RWPE1 (cell line): ENCODE measurements at regions of chr16 and their contacts with region 1.

Region 1: DNA sequence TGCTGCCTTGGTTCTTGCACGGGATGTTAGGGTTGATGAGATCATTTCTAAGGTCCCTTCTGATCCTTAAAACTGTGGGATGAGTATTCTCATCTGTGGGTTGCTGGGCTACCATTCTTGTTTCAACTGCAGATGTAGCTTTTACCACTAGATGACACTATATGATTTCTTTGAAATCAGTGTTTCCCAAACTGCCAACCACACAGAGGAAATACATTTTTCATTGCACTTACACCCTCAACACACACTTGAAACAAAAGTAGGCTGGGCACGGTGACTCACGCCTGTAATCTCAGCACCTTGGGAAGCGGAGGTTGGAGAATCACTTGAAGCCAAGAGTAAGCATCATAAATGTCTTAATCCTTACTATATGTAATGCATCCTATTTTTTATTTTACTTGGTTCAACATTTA is 15.3 kb downstream of the LCMT1 start:
- DNase-seq: peak; percentile 77
- H3K27ac ChIP-seq: no peak overlapping the region
- CTCF ChIP-seq: peak; percentile 72

Region 2: GRCh38 chr16:24863582-24864437 is 263.0 kb before region 1 on chr16:
- CTCF ChIA-PET with region 1: no interaction called
- POLR2A ChIA-PET with region 1: no interaction called
- DNase-seq: no peak
- H3K27ac ChIP-seq: no peak overlapping the region
- CTCF ChIP-seq: no peak

Region 3: DNA sequence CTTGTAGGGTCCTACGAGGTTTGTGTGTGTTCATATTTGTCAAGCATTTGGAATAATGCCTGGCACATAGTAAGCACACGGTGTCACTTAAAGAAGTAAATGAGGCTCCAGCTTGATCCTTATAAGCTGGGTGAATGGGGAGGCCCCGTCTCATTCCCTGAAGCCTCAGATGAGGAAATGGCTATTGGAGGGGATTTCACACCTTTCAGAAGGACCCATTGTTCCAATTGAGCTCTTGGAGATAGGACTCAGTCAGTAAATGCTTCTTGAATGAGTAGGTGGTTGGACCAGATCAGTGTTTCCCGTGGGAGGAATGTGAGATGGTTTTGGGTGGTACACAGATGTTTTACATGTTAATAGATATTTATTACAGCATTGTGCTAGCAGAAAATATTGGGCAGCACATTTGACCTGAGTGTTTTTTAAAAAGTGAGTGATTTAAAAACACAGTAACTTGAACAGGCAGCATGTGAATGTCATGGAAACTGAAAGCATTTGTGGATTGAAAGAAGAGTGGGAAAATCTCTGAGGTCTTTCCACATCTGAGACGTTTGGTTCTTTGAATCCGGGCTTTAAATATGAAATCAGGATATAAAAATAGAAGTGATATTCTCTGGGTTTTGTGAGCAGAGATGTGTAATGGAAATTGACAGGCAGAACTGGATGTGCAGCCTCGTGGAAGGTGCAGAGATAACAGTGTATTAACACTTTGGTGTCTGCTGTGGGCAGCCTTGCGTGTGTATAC is 75.2 kb before region 1 on chr16:
- CTCF ChIA-PET with region 1: no interaction called
- POLR2A ChIA-PET with region 1: no interaction called
- DNase-seq: no peak
- H3K27ac ChIP-seq: no peak overlapping the region
- CTCF ChIP-seq: no peak

Region 4: GRCh38 chr16:25109643-25110042 is 17.2 kb before region 1 on chr16:
- CTCF ChIA-PET with region 1: no interaction called
- POLR2A ChIA-PET with region 1: interaction called, 10 read pairs
- DNase-seq: peak; percentile 92
- H3K27ac ChIP-seq: no peak overlapping the region; the same call in 1 of the 2 replicates
- CTCF ChIP-seq: no peak